Activated B cell treated with CpG ODN at 0.5 μM for 24 hours (primary cell): ENCODE measurements at regions of chr16 and their contacts with region 1.

Region 1: DNA sequence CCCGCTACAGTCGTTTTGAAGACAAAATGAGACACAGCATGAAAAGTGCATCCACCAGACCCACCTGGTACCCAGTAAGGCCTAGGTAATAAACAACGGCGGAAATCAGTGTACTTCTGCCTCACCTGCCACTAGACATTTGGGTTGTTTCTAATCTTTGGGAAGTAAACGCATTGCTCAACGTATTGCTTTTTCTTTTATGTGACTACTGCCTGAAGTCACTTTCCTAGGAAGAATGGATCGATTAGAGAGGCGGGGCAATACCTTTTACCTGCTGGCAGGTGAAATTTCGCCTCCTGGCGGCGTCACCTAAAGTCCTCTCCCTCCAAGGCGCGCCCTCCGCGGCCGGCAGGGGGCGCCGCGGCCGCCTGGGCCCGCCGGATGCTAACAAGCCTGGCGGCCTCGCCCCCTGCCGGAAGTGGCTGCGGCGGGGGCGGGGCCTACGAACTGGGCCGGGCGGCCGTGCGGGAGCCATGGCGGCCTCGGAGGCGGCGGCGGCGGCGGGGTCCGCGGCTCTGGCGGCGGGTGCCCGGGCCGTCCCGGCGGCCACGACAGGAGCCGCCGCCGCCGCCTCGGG is at the start of gene ATMIN:
- DNase-seq: peak; percentile 92
- ATAC-seq: peak; percentile 97
- H3K4me3 Mint-ChIP-seq: peak within 1 kb of the TSS; percentile 79
- H3K27ac Mint-ChIP-seq: peak within 1 kb of the TSS; percentile 30
- H3K4me1 Mint-ChIP-seq: peaks cover 22% of the 10 kb centered on the region
- H3K27me3 Mint-ChIP-seq: no peaks in the 10 kb centered on the region
- CTCF ChIP-seq: peak; percentile 90
- total RNA-seq, gene ATMIN: 30.6 and 31.0 TPM in 2 replicates

Region 2: GRCh38 chr16:81095953-81096717 is 60.6 kb after region 1 on chr16 and contains the start of gene GCSH:
- CTCF ChIA-PET with region 1: interaction called, 4 read pairs
- POLR2A ChIA-PET with region 1: no interaction called
- intact Hi-C with region 1: loop called (anchors 1 kb)
- DNase-seq: peak; percentile 97
- ATAC-seq: peak; percentile 97
- H3K4me3 Mint-ChIP-seq: peak within 1 kb of the TSS; percentile 83
- H3K27ac Mint-ChIP-seq: peak within 1 kb of the TSS; percentile 50
- H3K4me1 Mint-ChIP-seq: peaks cover 18% of the 10 kb centered on the region
- H3K27me3 Mint-ChIP-seq: no peaks in the 10 kb centered on the region
- CTCF ChIP-seq: no peak
- total RNA-seq, gene GCSH: 8.4 and 8.8 TPM in 2 replicates